Esophagus muscularis mucosa (tissue), 4 donors: ENCODE measurements at regions of chr3 and their contacts with region 1.

Region 1: GRCh38 chr3:16048435-16049318 is 125.8 kb upstream of the GALNT15 start:
- DNase-seq: no peak
- H3K4me3 ChIP-seq: peak overlapping the region in 1 of 4 donors; percentile 34
- H3K27ac ChIP-seq: no peak overlapping the region
- H3K4me1 ChIP-seq: peaks cover 5 to 15% (median 7%) of the 10 kb centered on the region in 4 donors
- H3K27me3 ChIP-seq: no peaks in the 10 kb centered on the region
- CTCF ChIP-seq: peak; percentile 72 to 83 (median 81)
- EP300 ChIP-seq: no peak
- POLR2A ChIP-seq: no peak

Region 2: DNA sequence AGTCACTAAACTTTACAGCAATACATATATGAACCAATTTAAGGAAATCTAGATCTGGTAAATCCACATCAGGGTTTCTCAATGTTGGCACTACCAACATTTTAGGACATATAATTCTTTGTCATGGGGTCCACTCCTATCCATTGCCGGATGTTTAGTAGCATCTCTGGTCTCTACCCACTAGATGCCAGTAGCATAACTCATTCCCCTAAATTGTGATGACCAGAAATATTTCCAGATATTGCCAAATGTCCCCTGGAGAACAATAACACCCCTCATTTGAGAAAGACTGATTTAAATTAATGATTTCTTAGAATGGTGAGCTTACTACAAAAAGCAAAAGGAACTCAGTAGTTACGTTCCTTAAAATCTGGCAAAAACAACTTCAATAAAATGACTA is 227.8 kb before region 1 on chr3:
- intact Hi-C with region 1: loop called (anchors 5 kb)
- DNase-seq: no peak
- H3K4me3 ChIP-seq: no peak overlapping the region
- H3K27ac ChIP-seq: no peak overlapping the region
- H3K4me1 ChIP-seq: peaks cover 10 to 18% (median 17%) of the 10 kb centered on the region in 4 donors
- H3K27me3 ChIP-seq: no peaks in the 10 kb centered on the region
- CTCF ChIP-seq: no peak
- EP300 ChIP-seq: no peak
- POLR2A ChIP-seq: no peak